ENCODE measurements at regions of chr9 and their contacts with region 1.

Region 1: DNA sequence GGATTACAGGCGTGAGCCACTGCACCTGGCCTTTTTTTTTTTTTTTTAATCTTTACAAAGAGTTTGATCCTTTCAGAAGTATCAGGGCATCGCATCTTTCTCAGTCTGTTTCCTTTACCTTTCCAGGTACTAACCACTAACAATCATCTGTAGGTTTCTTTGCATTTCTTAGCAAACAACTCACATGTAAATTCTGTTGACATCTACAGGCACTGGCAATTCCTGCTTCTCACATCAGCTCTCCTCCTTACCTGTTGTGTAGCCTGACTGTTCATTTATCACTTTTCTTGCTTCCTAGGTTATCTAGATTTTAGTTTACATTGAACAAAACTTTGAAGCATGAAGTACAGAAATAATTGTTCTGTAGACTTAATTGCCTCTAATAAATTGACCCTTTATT is 27.5 kb upstream of the VPS13A start:
- DNase-seq: no peak
- ATAC-seq: no peak
- H3K4me3 Mint-ChIP-seq: no peak overlapping the region
- H3K27ac Mint-ChIP-seq: no peak overlapping the region
- H3K4me1 Mint-ChIP-seq: no peaks in the 10 kb centered on the region
- H3K27me3 Mint-ChIP-seq: peaks cover 3% of the 10 kb centered on the region
- CTCF ChIP-seq: no peak

Region 2: GRCh38 chr9:75200892-75201470 is 1948.9 kb before region 1 on chr9:
- CTCF ChIA-PET with region 1: no interaction called
- POLR2A ChIA-PET with region 1: no interaction called
- intact Hi-C with region 1: loop called (anchors 5 kb)
- DNase-seq: no peak
- ATAC-seq: no peak
- H3K4me3 Mint-ChIP-seq: no peak overlapping the region
- H3K27ac Mint-ChIP-seq: no peak overlapping the region
- H3K4me1 Mint-ChIP-seq: no peaks in the 10 kb centered on the region
- H3K27me3 Mint-ChIP-seq: no peaks in the 10 kb centered on the region
- CTCF ChIP-seq: peak; percentile 46

Region 3: DNA sequence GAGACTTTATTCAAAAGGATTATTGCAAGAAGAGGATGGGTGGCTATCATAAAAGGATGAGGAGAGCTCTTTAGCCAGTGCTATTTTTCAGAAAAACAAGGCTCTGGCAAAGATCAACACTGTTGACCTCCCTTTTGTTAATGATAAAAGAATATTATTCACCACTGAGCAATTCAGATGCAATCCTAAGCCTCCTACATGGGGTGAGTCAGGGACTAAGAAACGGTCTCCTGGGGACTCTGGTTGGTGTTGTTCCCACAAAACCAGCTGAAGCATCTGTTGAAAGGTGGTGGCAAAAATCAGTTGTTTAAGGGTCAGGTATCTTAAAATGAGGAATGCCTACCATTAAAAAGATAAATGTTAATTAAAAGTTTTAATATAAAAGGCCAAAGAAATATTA is 698.6 kb before region 1 on chr9:
- CTCF ChIA-PET with region 1: interaction called, 3 read pairs
- POLR2A ChIA-PET with region 1: no interaction called
- intact Hi-C with region 1: loop called (anchors 1 kb)
- DNase-seq: no peak
- ATAC-seq: no peak
- H3K4me3 Mint-ChIP-seq: no peak overlapping the region
- H3K27ac Mint-ChIP-seq: no peak overlapping the region
- H3K4me1 Mint-ChIP-seq: peaks cover 4% of the 10 kb centered on the region
- H3K27me3 Mint-ChIP-seq: no peaks in the 10 kb centered on the region
- CTCF ChIP-seq: no peak

Region 4: DNA sequence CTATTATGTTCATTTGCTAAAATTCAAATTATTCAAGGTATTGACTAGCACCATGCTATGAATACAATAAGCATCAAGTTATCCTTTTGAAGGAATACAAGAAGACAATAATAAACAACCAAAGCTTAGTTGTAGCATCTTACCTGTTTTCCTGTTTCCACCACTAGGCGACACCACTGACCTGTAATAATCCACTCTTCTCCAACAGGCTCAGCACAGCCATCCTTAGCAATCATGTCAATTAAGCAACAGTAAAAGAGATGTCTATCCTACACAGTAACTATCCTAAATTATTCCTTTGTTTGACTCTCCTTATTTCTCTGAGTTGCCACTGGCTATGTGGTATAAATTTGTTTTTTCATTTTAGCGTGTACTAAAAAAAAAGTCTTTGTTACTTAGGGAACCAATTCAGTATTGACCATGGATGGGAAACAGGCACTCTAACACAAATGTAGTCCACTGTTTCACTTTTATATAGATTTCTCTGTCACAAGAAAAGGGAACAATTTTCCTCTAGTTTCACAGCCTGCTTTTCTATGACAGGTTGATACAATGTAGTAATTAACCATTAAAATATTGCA is 339.4 kb before region 1 on chr9:
- CTCF ChIA-PET with region 1: interaction called, 3 read pairs
- POLR2A ChIA-PET with region 1: no interaction called
- intact Hi-C with region 1: loop called (anchors 1 kb)
- DNase-seq: no peak
- ATAC-seq: no peak
- H3K4me3 Mint-ChIP-seq: no peak overlapping the region
- H3K27ac Mint-ChIP-seq: no peak overlapping the region
- H3K4me1 Mint-ChIP-seq: no peaks in the 10 kb centered on the region
- H3K27me3 Mint-ChIP-seq: peaks cover 17% of the 10 kb centered on the region
- CTCF ChIP-seq: no peak

Measured in activated B cell treated with CpG ODN at 0.5 μM for 24 hours (primary cell).